Activated CD8-positive, alpha-beta T cell treated with anti-CD3 and anti-CD28 coated beads, Interleukin-2, amount 10 ng/mL, durations not matched to agents 7 days and 5 days (primary cell): ENCODE measurements at regions of chr6 and their contacts with region 1.

Region 1: GRCh38 chr6:106444777-106445507 is 84.4 kb downstream of the CRYBG1 start:
- DNase-seq: peak; percentile 59
- ATAC-seq: peak; percentile 63
- H3K4me3 Mint-ChIP-seq: no peak overlapping the region
- H3K27ac Mint-ChIP-seq: no peak overlapping the region
- H3K4me1 Mint-ChIP-seq: peaks cover 17% of the 10 kb centered on the region
- H3K27me3 Mint-ChIP-seq: peaks cover 29% of the 10 kb centered on the region

Region 2: GRCh38 chr6:106339334-106340029 is 105.5 kb before region 1 on chr6:
- CTCF ChIA-PET with region 1: interaction called, 13 read pairs
- POLR2A ChIA-PET with region 1: no interaction called
- DNase-seq: peak; percentile 60
- ATAC-seq: peak; percentile 92
- H3K4me3 Mint-ChIP-seq: peak overlapping the region; percentile 19
- H3K27ac Mint-ChIP-seq: no peak overlapping the region
- H3K4me1 Mint-ChIP-seq: peaks cover 5% of the 10 kb centered on the region
- H3K27me3 Mint-ChIP-seq: peaks cover 28% of the 10 kb centered on the region

Region 3: GRCh38 chr6:106519460-106520394 is 74.8 kb after region 1 on chr6:
- CTCF ChIA-PET with region 1: interaction called, 10 read pairs
- POLR2A ChIA-PET with region 1: no interaction called
- DNase-seq: peak; percentile 88
- ATAC-seq: peak; percentile 65
- H3K4me3 Mint-ChIP-seq: peak overlapping the region; percentile 97
- H3K27ac Mint-ChIP-seq: peak overlapping the region; percentile 99
- H3K4me1 Mint-ChIP-seq: peaks cover 67% of the 10 kb centered on the region
- H3K27me3 Mint-ChIP-seq: no peaks in the 10 kb centered on the region

Region 4: DNA sequence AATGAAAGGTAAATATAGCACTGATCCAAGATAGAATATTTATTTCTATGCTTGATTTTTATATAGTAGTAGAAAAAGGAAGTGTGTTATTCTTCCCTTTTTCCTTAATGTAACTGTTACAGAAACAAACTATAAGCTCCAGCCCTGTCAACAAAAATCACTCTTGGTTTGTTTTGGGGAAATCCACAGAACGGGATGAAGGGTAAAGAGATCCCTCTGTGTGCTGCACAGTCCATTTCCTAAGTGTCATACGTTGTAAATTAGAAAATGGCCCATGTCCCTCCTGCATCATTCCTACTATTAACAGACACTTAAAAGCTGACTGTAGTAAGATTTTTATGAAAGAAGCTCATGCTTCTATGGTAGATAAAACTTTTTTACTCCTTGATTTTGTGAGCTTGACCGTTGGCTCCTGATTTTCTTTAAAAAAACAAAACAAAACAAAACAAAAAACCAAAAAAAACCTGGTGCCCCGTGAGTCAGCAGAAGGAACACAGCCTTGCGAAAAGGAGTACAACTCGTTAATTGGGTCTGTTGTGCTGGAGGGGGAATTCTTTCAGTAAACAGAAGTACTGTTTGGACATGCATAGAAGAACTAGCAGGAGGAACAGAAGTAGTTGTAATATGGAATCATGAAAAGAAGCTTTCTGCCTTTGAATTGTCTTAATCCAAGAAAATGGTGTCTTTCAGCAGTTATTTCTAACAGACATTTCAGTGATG is 116.9 kb after region 1 on chr6:
- CTCF ChIA-PET with region 1: interaction called, 114 read pairs
- POLR2A ChIA-PET with region 1: no interaction called
- DNase-seq: no peak
- ATAC-seq: no peak
- H3K4me3 Mint-ChIP-seq: no peak overlapping the region
- H3K27ac Mint-ChIP-seq: no peak overlapping the region
- H3K4me1 Mint-ChIP-seq: peaks cover 4% of the 10 kb centered on the region
- H3K27me3 Mint-ChIP-seq: no peaks in the 10 kb centered on the region

Region 5: GRCh38 chr6:106979427-106979884 is 534.5 kb after region 1 on chr6:
- CTCF ChIA-PET with region 1: interaction called, 18 read pairs
- POLR2A ChIA-PET with region 1: no interaction called
- DNase-seq: peak; percentile 84
- ATAC-seq: peak; percentile 80
- H3K4me3 Mint-ChIP-seq: no peak overlapping the region
- H3K27ac Mint-ChIP-seq: no peak overlapping the region
- H3K4me1 Mint-ChIP-seq: peaks cover 7% of the 10 kb centered on the region
- H3K27me3 Mint-ChIP-seq: peaks cover 26% of the 10 kb centered on the region